ENCODE measurements at regions of chr1 and their contacts with region 1.

Region 1: DNA sequence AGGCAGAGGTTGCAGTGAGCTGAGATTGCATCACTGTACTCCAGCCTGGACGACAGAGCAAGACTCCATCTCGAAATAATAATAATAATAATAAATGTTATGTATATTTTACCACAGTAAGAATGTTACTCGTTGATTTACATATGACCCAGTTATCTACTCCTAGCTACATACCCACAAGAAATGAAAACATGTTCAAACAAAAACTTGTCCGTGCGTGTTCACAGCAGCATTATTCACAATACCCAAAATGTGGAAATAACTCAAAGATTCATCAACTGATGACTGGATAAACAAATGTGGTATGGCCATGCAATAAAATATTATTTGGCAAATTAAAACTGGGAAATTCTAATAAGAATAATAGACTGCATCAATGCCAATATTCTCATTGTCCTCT is 31.7 kb upstream of the ENSA start:
- DNase-seq: no peak
- ATAC-seq: no peak
- H3K4me3 ChIP-seq: no peak overlapping the region
- H3K27ac ChIP-seq: no peak overlapping the region
- H3K4me1 ChIP-seq: no peaks in the 10 kb centered on the region
- H3K27me3 ChIP-seq: no peaks in the 10 kb centered on the region
- CTCF ChIP-seq: no peak
- EP300 ChIP-seq: no peak
- POLR2A ChIP-seq: no peak
- RAD21 ChIP-seq: no peak

Region 2: DNA sequence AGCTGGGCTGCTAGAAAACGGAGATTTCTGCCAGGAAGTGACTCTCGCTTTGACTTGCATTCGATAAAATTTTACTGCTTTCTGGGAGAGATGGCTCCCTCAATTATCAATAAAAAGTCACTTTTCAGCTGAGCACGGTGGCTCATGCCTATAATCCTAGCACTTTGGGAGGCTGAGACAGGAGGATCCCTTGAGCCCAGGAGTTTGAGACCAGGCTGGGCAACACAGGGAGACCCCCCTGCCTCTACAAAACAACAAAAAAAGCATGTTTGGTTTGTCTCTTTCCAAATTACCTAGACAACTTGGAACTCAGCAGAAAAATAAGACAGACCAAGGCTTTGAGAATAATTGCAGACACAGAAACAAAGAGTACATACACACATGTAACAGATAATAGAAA is 18.9 kb before region 1 on chr1:
- CTCF ChIA-PET with region 1: interaction called, 8 read pairs
- POLR2A ChIA-PET with region 1: no interaction called
- RAD21 ChIA-PET with region 1: no interaction called
- SMC1A ChIA-PET with region 1: interaction called, 3 read pairs
- in situ Hi-C with region 1: no loop called
- intact Hi-C with region 1: loop called (anchors 2 kb)
- DNase-seq: no peak
- ATAC-seq: no peak
- H3K4me3 ChIP-seq: no peak overlapping the region
- H3K27ac ChIP-seq: no peak overlapping the region
- H3K4me1 ChIP-seq: no peaks in the 10 kb centered on the region
- H3K27me3 ChIP-seq: no peaks in the 10 kb centered on the region
- CTCF ChIP-seq: no peak
- EP300 ChIP-seq: no peak
- POLR2A ChIP-seq: no peak
- RAD21 ChIP-seq: no peak

Region 3: DNA sequence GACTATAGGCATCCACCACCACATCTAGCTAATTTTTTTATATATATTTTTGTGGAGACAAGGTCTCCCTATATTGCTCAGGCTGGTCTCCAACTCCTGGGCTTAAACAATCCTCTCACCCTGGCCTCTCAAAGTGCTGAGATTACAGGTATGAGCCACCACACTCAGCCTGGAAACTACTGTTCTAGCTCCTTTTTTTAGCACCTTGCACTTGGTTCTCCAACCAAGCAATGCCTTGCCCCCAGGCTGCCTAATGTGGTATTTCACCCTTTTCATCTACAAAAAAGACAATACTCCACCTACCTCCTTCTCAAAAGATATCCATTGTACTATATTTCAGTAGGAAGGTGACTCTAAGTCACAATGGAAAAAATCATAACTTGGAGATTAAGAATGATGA is 208.5 kb after region 1 on chr1:
- CTCF ChIA-PET with region 1: no interaction called
- POLR2A ChIA-PET with region 1: no interaction called
- RAD21 ChIA-PET with region 1: no interaction called
- SMC1A ChIA-PET with region 1: no interaction called
- in situ Hi-C with region 1: no loop called
- intact Hi-C with region 1: no loop called
- DNase-seq: no peak
- ATAC-seq: peak; percentile 60
- H3K4me3 ChIP-seq: no peak overlapping the region
- H3K27ac ChIP-seq: no peak overlapping the region
- H3K4me1 ChIP-seq: peaks cover 3% of the 10 kb centered on the region; the same call in 1 of the 2 replicates
- H3K27me3 ChIP-seq: no peaks in the 10 kb centered on the region
- CTCF ChIP-seq: peak in 1 of 3 experiments; percentile 11; a peak in 1 of 6 replicates
- EP300 ChIP-seq: no peak
- POLR2A ChIP-seq: no peak
- RAD21 ChIP-seq: no peak

Measured in GM12878 (cell line).